ENCODE measurements at regions of chr4 and their contacts with region 1.

Region 1: GRCh38 chr4:145719752-145720624 is 40.0 kb downstream of the C4orf51 start:
- DNase-seq: no peak

Region 2: DNA sequence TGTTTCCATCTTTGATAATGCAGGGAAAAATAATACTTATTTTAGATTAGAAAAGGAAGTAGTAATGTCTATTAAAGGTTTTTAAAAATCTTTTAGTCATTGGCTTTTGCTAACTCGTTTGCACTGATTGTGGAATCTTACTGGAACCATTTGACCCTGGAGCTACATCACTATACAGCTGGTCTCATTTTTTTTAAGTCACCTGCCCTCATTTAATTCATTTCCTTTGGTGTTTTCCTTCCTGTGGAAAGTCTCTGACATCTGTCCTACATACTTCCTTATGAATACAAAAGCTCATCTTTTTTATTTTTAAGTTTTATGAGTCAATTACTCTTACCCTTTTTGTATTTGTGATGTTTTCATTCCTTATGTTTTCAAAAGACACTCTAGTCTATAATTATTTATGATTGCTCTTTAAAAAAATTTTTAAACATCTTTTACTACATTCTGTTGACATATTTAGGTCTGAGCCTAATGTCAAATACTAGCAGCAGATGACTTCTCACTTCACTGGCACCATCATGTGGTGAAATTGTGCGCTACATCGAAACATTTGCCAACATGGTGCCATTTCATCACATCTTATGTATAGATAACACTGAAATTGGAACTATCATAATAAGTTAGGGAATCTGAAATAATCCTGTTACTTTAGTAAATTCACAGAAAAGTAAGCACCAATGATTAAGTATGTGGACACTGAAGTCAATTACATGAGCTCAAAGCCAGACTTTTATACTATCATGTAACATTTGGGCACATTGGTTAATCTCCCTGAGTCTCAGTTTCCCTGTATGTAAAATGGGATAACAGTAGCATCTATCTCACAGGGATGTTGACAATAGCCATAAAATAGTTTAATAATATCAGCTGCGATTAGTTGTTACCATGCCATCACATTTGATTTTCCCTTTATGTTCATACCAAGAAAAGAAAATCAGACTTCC is 110.2 kb before region 1 on chr4:
- intact Hi-C with region 1: no loop called
- DNase-seq: no peak

Region 3: DNA sequence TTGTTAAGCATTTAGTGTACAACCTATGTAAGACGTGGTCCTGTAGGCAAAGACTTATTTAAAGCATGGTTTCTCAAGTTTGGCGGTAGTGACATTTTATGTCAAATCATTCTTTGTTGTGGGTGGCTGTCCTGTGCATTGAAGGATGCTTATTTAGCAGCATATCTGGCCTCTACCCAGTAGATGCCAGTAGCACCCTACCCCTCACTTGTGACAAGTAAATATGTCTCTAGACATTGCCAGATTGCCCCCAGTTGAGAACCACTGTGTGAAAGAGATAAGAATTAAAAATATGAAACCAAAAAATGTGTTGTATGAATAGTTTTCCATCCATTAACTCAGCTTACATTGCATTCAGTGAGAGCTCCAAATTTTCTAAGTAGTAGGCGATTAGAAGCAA is 75.3 kb before region 1 on chr4:
- intact Hi-C with region 1: no loop called
- DNase-seq: no peak

Region 4: DNA sequence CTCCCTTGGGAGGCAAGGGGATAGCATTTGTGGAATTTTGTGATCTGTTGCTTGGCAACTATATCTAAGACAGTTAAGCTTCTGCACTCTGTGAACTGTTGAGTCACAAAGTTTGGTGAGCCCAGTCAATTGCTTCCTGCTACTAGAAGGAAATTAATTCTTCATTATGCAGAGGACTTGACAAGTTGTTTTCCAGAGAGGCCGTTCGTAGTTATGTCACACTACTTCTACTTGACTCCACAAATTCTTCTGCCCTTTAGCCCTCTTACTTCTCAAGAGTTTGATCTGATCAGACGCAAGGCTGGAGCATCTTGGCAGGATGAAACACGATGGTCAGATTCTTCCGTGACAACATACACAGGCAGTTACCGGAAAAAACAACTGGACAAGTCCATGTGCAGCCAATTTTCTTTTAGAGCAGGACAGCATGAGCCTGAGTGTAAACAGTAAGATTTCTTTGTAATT is 40.0 kb before region 1 on chr4 and contains the start of gene C4orf51:
- intact Hi-C with region 1: loop called in 1 of 2 experiments (anchors 1 kb)
- DNase-seq: no peak
- total RNA-seq, gene C4orf51: not detected

Region 5: DNA sequence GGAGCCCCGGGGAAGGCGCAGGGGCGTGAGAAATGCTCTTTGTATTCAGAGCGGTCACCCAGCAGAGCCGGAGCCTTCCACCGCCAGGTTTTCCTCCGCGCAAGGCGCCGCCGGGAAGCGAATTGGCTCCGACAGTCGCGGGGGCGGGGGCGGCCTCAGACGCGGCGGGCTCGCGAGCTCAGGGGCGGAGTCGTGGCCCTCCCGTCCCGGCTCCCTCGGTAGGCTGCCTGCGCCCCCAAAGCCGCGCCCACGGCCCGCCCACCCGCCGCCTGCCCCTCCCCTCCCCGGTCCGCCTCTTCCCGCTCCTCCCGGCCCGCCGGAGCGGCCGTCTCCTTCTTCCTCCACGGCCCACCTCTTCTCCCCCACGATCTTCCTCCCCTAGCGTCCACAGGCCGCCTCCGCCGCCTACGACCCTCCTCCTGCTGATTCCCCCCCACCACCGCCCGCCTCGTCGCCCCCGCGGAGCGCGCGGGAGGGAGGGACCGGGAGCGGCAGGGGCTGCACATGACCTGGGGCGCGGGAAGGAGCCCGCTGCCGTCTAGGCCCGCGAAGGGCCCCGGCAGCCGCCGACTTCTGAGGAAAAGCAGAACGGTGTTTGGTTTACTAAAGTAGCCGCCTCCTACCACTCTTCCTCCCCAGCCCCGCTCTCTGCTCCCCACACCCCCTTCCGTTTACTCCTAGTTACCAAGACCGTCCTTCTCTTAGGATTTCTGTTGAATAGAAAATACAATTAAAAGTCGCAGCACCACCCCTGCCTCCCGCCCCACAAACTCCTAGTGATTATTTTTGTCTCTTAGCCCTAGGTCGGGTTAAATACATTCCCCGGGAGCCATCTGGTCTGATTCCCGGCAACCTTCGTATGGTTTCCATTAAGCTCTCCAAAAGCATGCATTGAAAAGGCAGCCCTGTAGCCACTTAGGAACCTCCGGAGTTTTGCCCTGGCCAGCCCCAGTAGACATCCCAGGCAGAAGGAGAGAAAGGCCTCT is 13.2 kb after region 1 on chr4:
- intact Hi-C with region 1: no loop called
- DNase-seq: peak; percentile 98

Region 6: GRCh38 chr4:146370841-146371240 is 650.9 kb after region 1 on chr4:
- intact Hi-C with region 1: loop called in 1 of 2 experiments (anchors 5 kb)
- DNase-seq: no peak

Measured in posterior vena cava (tissue), 2 donors.